ENCODE measurements at regions of chr6 and their contacts with region 1.

Region 1: DNA sequence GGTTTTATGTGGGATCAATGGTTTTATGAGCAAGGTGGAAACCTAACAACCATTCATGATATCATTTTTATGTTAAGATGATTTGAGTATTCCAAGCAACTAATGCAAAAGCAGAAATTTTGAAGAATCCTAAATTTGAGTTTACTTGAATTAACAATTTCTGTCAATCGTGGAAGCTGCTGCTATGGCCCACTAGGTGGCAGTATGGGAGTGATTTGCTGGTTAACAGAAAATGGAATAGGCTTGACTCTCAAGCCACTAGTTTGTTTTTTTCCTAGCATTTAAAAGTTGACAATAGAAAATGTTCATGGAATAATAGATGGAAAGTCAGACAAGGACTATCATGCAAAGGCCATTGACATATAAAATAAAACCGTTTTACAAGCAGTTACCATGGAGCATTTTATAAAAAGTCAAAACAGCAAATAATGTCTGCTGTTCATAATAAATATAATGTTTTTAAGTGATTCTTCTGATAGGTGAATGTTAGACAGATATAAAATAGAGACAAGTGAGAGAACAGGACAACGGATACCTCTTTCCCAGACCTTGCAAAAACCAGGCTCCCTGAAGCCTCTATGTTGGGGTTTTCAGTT is 43.0 kb upstream of the TMEM200A start:
- DNase-seq: peak; percentile 69
- H3K4me3 Mint-ChIP-seq: no peak overlapping the region
- H3K27ac Mint-ChIP-seq: no peak overlapping the region
- H3K4me1 Mint-ChIP-seq: no peaks in the 10 kb centered on the region
- H3K27me3 Mint-ChIP-seq: no peaks in the 10 kb centered on the region

Region 2: GRCh38 chr6:130047088-130047995 is 275.4 kb before region 1 on chr6:
- CTCF ChIA-PET with region 1: no interaction called
- intact Hi-C with region 1: no loop called
- DNase-seq: no peak
- H3K4me3 Mint-ChIP-seq: no peak overlapping the region
- H3K27ac Mint-ChIP-seq: no peak overlapping the region
- H3K4me1 Mint-ChIP-seq: no peaks in the 10 kb centered on the region
- H3K27me3 Mint-ChIP-seq: no peaks in the 10 kb centered on the region

Region 3: GRCh38 chr6:130293800-130294199 is 29.0 kb before region 1 on chr6:
- CTCF ChIA-PET with region 1: no interaction called
- intact Hi-C with region 1: loop called (anchors 2 kb)
- DNase-seq: peak; percentile 37
- H3K4me3 Mint-ChIP-seq: no peak overlapping the region
- H3K27ac Mint-ChIP-seq: no peak overlapping the region
- H3K4me1 Mint-ChIP-seq: no peaks in the 10 kb centered on the region
- H3K27me3 Mint-ChIP-seq: no peaks in the 10 kb centered on the region

Region 4: GRCh38 chr6:130381459-130382380 is 58.9 kb after region 1 on chr6:
- CTCF ChIA-PET with region 1: no interaction called
- intact Hi-C with region 1: loop called (anchors 2 kb)
- DNase-seq: peak; percentile 56
- H3K4me3 Mint-ChIP-seq: no peak overlapping the region
- H3K27ac Mint-ChIP-seq: no peak overlapping the region
- H3K4me1 Mint-ChIP-seq: peaks cover 14% of the 10 kb centered on the region
- H3K27me3 Mint-ChIP-seq: no peaks in the 10 kb centered on the region

Region 5: GRCh38 chr6:130760006-130760405 is 437.2 kb after region 1 on chr6:
- CTCF ChIA-PET with region 1: no interaction called
- intact Hi-C with region 1: loop called (anchors 2 kb)
- DNase-seq: no peak
- H3K4me3 Mint-ChIP-seq: no peak overlapping the region
- H3K27ac Mint-ChIP-seq: no peak overlapping the region
- H3K4me1 Mint-ChIP-seq: no peaks in the 10 kb centered on the region
- H3K27me3 Mint-ChIP-seq: no peaks in the 10 kb centered on the region

Region 6: GRCh38 chr6:130872250-130873095 is 549.7 kb after region 1 on chr6:
- CTCF ChIA-PET with region 1: interaction called, 6 read pairs
- intact Hi-C with region 1: loop called (anchors 1 kb)
- DNase-seq: peak; percentile 86
- H3K4me3 Mint-ChIP-seq: no peak overlapping the region
- H3K27ac Mint-ChIP-seq: no peak overlapping the region
- H3K4me1 Mint-ChIP-seq: peaks cover 4% of the 10 kb centered on the region
- H3K27me3 Mint-ChIP-seq: no peaks in the 10 kb centered on the region